ENCODE measurements at regions of chr22 and their contacts with region 1.

Region 1: GRCh38 chr22:22787786-22788459 is 99.7 kb upstream of the IGLL5 start:
- DNase-seq: no peak
- H3K4me3 ChIP-seq: no peak overlapping the region
- CTCF ChIP-seq: peak; percentile 75

Region 2: GRCh38 chr22:22684580-22685561 is 103.1 kb before region 1 on chr22:
- CTCF ChIA-PET with region 1: no interaction called
- POLR2A ChIA-PET with region 1: no interaction called
- DNase-seq: peak; percentile 12
- H3K4me3 ChIP-seq: no peak overlapping the region
- CTCF ChIP-seq: peak; percentile 24

Region 3: GRCh38 chr22:22770280-22770871 is 17.5 kb before region 1 on chr22:
- CTCF ChIA-PET with region 1: interaction called, 13 read pairs
- POLR2A ChIA-PET with region 1: no interaction called
- DNase-seq: no peak
- H3K4me3 ChIP-seq: no peak overlapping the region
- CTCF ChIP-seq: peak; percentile 75

Region 4: GRCh38 chr22:22799561-22799960 is 11.6 kb after region 1 on chr22:
- CTCF ChIA-PET with region 1: interaction called, 10 read pairs
- POLR2A ChIA-PET with region 1: no interaction called
- DNase-seq: no peak
- H3K4me3 ChIP-seq: no peak overlapping the region
- CTCF ChIP-seq: no peak

Region 5: GRCh38 chr22:22810018-22810427 is 22.1 kb after region 1 on chr22:
- CTCF ChIA-PET with region 1: interaction called, 10 read pairs
- POLR2A ChIA-PET with region 1: no interaction called
- DNase-seq: no peak
- H3K4me3 ChIP-seq: no peak overlapping the region
- CTCF ChIP-seq: peak; percentile 81

Region 6: DNA sequence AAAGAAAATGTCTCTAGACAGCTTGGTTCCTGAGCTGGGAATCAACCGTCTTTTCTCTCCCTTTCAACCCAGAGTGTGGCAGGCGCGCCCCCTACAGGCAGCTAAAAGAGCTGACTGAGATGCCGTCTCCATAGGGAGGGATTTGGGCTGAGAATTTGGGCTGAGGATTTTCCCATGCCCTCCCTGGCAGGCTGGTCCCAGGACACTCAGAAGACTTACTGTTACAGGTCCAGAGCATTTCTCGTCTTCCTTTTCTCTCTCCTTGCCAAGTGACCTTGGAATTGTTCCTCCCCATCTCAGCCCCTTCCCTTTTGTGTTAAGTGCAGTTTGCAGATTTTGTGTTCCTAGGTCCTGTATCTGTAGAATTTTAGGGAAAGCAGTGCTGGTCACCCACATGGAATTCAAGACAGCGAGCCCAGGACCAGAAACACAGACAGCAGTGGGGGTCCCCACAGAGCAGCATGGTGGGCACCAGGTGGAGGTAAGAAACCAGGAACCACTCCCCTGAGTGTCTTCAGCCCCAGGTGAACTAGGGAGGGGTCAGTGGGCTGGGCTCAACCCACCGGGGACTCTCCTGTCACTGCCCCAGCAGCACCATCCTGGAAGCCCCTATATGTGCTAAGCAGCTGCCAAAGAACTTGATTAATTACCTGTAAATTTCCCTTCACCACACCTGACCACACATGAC is 89.7 kb after region 1 on chr22:
- CTCF ChIA-PET with region 1: interaction called, 10 read pairs
- POLR2A ChIA-PET with region 1: no interaction called
- DNase-seq: no peak
- H3K4me3 ChIP-seq: no peak overlapping the region
- CTCF ChIP-seq: peak; percentile 81